Activated naive CD4-positive, alpha-beta T cell treated with anti-CD3 and anti-CD28 coated beads, Interleukin-2, amount 10 ng/mL, durations not matched to agents 7 days and 5 days (primary cell): ENCODE measurements at regions of chr20 and their contacts with region 1.

Region 1: DNA sequence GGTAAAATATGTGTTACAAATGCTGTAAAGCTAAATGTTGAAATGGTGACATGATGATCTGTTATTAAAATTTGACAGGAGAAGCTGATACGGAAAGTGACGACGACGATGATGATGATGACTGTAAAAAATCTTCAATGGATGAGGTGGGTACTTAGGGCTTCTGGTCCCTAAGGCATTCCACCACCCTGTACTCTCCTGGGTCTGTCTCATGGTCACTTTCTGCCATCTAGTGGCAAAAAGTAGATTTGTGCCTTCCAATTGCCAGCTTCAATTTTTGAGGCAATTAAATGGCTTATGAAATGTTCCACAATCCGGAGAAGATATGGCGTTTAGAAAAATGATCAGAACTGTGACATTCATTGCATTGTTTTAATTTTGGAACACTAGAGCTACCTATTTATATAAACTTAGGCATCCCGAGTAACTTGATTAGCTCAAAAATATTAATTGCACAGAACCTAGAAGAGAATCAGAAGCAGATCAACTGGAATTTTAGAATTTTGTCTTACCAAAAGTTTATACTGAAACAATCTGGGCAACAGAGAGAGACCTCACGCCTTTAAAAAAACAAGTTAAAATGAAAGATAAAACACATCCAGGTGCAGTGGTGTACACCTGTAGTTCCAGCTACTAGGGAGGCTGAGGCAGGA is 346.5 kb upstream of the PLCB4 start:
- DNase-seq: peak; percentile 39
- H3K4me3 Mint-ChIP-seq: no peak overlapping the region
- H3K27ac Mint-ChIP-seq: no peak overlapping the region
- H3K4me1 Mint-ChIP-seq: no peaks in the 10 kb centered on the region
- H3K27me3 Mint-ChIP-seq: no peaks in the 10 kb centered on the region

Region 2: GRCh38 chr20:7938058-7938457 is 784.3 kb before region 1 on chr20:
- CTCF ChIA-PET with region 1: interaction called, 48 read pairs
- DNase-seq: no peak
- H3K4me3 Mint-ChIP-seq: no peak overlapping the region
- H3K27ac Mint-ChIP-seq: no peak overlapping the region
- H3K4me1 Mint-ChIP-seq: no peaks in the 10 kb centered on the region
- H3K27me3 Mint-ChIP-seq: no peaks in the 10 kb centered on the region

Region 3: GRCh38 chr20:8043687-8044282 is 678.6 kb before region 1 on chr20:
- CTCF ChIA-PET with region 1: interaction called, 47 read pairs
- DNase-seq: no peak
- H3K4me3 Mint-ChIP-seq: no peak overlapping the region
- H3K27ac Mint-ChIP-seq: no peak overlapping the region
- H3K4me1 Mint-ChIP-seq: no peaks in the 10 kb centered on the region
- H3K27me3 Mint-ChIP-seq: peaks cover 8% of the 10 kb centered on the region

Region 4: DNA sequence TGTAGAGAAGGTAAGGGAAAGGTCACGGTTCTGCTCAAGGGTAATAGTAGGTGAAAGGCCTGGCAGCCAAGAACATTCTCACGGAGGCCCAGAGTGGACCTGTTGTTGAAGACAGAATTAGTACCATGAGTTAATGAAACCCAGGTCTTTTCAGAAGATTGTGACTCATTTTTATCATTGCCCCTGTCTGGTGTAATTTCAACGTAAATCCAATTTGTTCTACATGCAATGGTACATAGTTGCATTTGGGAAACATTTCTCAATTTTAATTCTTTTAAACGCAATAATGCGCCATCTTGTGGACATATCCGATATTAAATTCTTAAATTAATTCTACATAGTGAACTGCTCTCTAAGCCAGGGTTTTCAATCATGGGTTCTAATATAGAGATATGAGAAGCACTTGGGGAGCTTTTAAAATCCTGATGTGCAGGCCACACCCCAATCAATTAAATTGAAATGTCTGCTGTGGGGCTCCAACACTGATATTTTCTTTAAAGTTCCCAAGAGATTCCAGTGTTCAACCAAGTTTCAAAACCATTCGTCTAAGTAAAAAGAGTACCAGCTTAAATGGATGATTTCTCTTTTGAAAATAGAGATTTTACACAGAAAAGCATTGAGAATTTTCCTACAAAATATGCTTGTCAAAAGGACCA is 332.9 kb before region 1 on chr20:
- CTCF ChIA-PET with region 1: interaction called, 10 read pairs
- DNase-seq: no peak
- H3K4me3 Mint-ChIP-seq: no peak overlapping the region
- H3K27ac Mint-ChIP-seq: no peak overlapping the region
- H3K4me1 Mint-ChIP-seq: no peaks in the 10 kb centered on the region
- H3K27me3 Mint-ChIP-seq: peaks cover 2% of the 10 kb centered on the region

Region 5: GRCh38 chr20:8709627-8710026 is 12.8 kb before region 1 on chr20:
- CTCF ChIA-PET with region 1: interaction called, 21 read pairs
- DNase-seq: no peak
- H3K4me3 Mint-ChIP-seq: no peak overlapping the region
- H3K27ac Mint-ChIP-seq: no peak overlapping the region
- H3K4me1 Mint-ChIP-seq: no peaks in the 10 kb centered on the region
- H3K27me3 Mint-ChIP-seq: no peaks in the 10 kb centered on the region